Calu3 (cell line): ENCODE measurements at regions of chr7 and their contacts with region 1.

Region 1: DNA sequence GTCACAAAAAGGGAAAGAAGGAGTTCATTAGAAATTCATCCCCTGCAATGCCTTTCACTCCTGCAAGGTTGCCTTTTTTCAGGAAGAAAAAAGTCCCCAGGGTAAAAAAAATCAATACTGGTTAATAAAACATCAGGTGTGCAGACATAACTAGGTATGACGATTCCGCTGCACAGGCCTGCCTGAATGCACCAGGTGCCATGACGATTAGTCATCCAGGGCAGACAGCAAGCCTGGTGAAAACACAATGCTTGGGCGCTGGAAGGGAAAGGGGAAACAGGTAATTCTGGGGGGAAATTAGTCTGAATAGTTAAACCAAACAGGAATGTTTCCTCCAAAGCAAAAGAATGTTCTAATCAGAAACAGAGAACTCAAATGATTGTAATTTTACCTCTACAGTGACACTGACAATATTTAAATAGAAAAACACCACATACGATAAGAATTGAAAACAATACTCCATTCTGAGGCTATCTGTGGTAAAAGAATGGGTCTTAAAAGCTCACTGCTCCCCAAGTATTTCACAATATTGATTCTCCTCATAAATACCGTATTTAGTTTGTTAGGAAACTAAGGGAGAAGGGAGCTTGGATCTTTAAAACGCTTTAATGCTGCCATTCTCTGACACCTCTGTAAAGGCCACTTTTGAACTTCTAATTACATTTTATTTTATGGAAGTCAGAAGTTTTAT is 45.2 kb downstream of the VPS41 start:
- DNase-seq: peak; percentile 96
- H3K4me3 Mint-ChIP-seq: peak overlapping the region; percentile 52
- H3K27ac Mint-ChIP-seq: peak overlapping the region; percentile 77
- H3K4me1 Mint-ChIP-seq: peaks cover 33% of the 10 kb centered on the region
- H3K27me3 Mint-ChIP-seq: no peaks in the 10 kb centered on the region
- CTCF ChIP-seq: no peak

Region 2: GRCh38 chr7:38886265-38886664 is 22.5 kb after region 1 on chr7:
- CTCF ChIA-PET with region 1: interaction called, 5 read pairs
- intact Hi-C with region 1: loop called (anchors 1 kb)
- DNase-seq: peak; percentile 56
- H3K4me3 Mint-ChIP-seq: peak overlapping the region; percentile 40
- H3K27ac Mint-ChIP-seq: peak overlapping the region; percentile 68
- H3K4me1 Mint-ChIP-seq: peaks cover 65% of the 10 kb centered on the region
- H3K27me3 Mint-ChIP-seq: no peaks in the 10 kb centered on the region
- CTCF ChIP-seq: peak; percentile 49